ENCODE measurements at regions of chr12 and their contacts with region 1.

Region 1: DNA sequence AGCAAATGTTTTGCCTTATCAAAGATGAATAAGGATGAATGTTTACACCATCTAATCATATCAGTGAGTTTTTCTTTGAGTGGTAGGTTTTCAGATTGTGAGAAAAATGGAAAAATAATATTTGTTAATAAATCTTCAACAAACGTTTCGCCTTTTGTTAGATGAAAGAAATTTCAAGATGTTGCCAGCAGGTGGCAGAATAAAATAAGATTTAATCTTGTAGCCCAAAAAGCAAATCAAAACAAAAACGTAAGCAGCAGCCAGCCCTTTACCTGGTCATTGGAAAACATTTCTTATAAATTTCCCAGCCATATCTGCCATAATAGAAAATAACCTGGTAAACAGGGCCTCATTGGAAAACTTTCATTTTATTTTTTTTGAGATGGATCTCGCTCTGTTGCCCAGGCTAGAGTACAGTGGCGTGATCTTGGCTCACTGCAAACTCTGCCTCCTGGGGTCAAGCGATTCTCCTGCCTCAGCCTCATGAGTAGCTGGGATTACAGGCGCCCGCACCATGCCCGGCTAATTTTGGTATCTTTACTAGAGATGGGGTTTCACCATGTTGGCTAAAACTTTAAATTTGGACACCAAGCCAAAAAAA is 15.4 kb upstream of the TMEM120B start:
- DNase-seq: peak in 1 of 2 donors; percentile 76
- H3K4me3 ChIP-seq: no peak overlapping the region
- H3K27ac ChIP-seq: no peak overlapping the region
- H3K4me1 ChIP-seq: peaks cover 6 to 18% (median 14%) of the 10 kb centered on the region in 4 donors
- H3K27me3 ChIP-seq: no peaks in the 10 kb centered on the region
- CTCF ChIP-seq: peak in 5 of 7 experiments; percentile 34 to 80 (median 43)
- EP300 ChIP-seq: no peak
- POLR2A ChIP-seq: no peak

Region 2: GRCh38 chr12:121590476-121591143 is 106.6 kb before region 1 on chr12:
- intact Hi-C with region 1: no loop called
- DNase-seq: peak in 1 of 2 donors; percentile 70
- H3K4me3 ChIP-seq: peak overlapping the region; percentile 27 to 46 (median 34)
- H3K27ac ChIP-seq: peak overlapping the region; percentile 61 to 89 (median 85)
- H3K4me1 ChIP-seq: peaks cover 0 to 19% (median 3%) of the 10 kb centered on the region in 4 donors
- H3K27me3 ChIP-seq: no peaks in the 10 kb centered on the region
- CTCF ChIP-seq: no peak
- EP300 ChIP-seq: no peak
- POLR2A ChIP-seq: no peak

Region 3: GRCh38 chr12:121793838-121794533 is 96.8 kb after region 1 on chr12:
- intact Hi-C with region 1: loop called (anchors 5 kb)
- DNase-seq: peak; percentile 94 to 98
- H3K4me3 ChIP-seq: peak overlapping the region; percentile 58 to 61 (median 59)
- H3K27ac ChIP-seq: peak overlapping the region; percentile 99 to 100 (median 100)
- H3K4me1 ChIP-seq: peaks cover 66 to 100% (median 79%) of the 10 kb centered on the region in 4 donors
- H3K27me3 ChIP-seq: no peaks in the 10 kb centered on the region
- CTCF ChIP-seq: peak in 6 of 7 experiments; percentile 76 to 100 (median 98)
- EP300 ChIP-seq: no peak
- POLR2A ChIP-seq: no peak

Region 4: GRCh38 chr12:121829250-121829918 is 132.2 kb after region 1 on chr12:
- intact Hi-C with region 1: no loop called
- DNase-seq: no peak
- H3K4me3 ChIP-seq: no peak overlapping the region
- H3K27ac ChIP-seq: peak overlapping the region in 2 of 5 donors; percentile 20 to 30
- H3K4me1 ChIP-seq: peaks cover 0 to 17% (median 2%) of the 10 kb centered on the region in 4 donors
- H3K27me3 ChIP-seq: no peaks in the 10 kb centered on the region
- CTCF ChIP-seq: no peak
- EP300 ChIP-seq: no peak
- POLR2A ChIP-seq: no peak

Measured in stomach (tissue), 19 donors.